ENCODE measurements at regions of chr17 and their contacts with region 1.

Region 1: GRCh38 chr17:32111141-32111771 is 31.0 kb upstream of the RHOT1 start:
- DNase-seq: peak; percentile 36
- H3K4me3 Mint-ChIP-seq: no peak overlapping the region
- H3K27ac Mint-ChIP-seq: no peak overlapping the region
- H3K4me1 Mint-ChIP-seq: peaks cover 27% of the 10 kb centered on the region
- H3K27me3 Mint-ChIP-seq: no peaks in the 10 kb centered on the region

Region 2: GRCh38 chr17:32033223-32033622 is 78.0 kb before region 1 on chr17:
- CTCF ChIA-PET with region 1: no interaction called
- POLR2A ChIA-PET with region 1: no interaction called
- DNase-seq: no peak
- H3K4me3 Mint-ChIP-seq: no peak overlapping the region
- H3K27ac Mint-ChIP-seq: no peak overlapping the region
- H3K4me1 Mint-ChIP-seq: peaks cover 4% of the 10 kb centered on the region
- H3K27me3 Mint-ChIP-seq: no peaks in the 10 kb centered on the region

Region 3: DNA sequence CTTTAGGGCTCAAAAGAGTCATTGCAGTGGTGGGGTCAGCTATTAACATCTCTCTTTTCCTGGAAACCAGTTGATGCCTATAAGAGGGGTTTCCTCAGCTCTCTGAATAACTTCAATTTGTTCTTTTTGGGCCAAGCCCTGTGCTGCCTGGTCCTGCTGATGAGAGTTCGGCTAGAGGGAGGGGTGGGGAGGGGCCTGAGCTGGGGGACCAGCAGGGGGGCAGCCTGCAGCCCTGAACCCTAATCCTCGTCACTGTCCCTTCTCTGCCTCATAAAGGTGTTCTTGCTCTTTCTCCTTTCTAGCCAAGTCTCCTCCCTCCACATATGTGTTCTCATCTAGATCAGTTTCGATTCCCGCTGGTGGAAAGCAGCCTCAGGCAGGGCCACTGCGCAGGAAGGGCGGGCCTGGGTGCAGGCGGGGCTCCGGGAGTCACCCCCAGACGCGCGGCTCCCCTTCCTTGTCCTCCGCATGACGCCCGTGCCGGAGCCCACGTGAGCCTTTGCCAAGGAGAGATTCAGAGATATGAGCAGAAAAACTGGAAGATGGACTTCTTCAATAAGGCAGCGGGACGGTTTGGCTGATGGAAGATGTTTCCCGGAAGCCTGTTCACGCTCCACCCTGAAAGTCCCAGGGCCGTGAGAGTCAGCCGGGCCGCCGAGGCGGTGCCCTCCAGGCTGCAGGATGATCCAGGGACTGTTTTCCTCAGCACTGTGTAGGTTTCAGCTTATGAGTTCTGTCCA is 16.1 kb after region 1 on chr17:
- CTCF ChIA-PET with region 1: interaction called, 11 read pairs
- POLR2A ChIA-PET with region 1: no interaction called
- DNase-seq: peak; percentile 94
- H3K4me3 Mint-ChIP-seq: peak overlapping the region; percentile 86
- H3K27ac Mint-ChIP-seq: peak overlapping the region; percentile 96
- H3K4me1 Mint-ChIP-seq: peaks cover 39% of the 10 kb centered on the region
- H3K27me3 Mint-ChIP-seq: peaks cover 2% of the 10 kb centered on the region

Region 4: DNA sequence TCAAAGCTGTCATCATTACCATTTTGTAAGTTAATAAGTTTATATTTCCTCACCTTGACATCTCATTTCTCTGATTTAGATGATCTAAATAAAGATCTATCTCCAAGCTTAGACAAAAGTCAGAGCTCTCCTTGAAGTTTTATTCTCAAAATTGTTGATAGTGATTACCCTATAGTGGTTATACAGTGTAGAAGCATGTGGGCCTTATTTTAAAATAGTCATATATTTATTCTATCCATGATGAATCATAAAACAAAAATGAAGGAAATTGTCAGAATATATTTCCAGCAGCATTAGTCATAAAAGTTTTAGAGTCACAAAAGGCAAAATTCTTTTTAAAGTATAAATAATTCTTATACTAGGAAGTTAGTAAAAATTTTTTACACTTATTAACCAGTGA is 80.0 kb after region 1 on chr17:
- CTCF ChIA-PET with region 1: no interaction called
- POLR2A ChIA-PET with region 1: no interaction called
- DNase-seq: no peak
- H3K4me3 Mint-ChIP-seq: no peak overlapping the region
- H3K27ac Mint-ChIP-seq: no peak overlapping the region
- H3K4me1 Mint-ChIP-seq: no peaks in the 10 kb centered on the region
- H3K27me3 Mint-ChIP-seq: no peaks in the 10 kb centered on the region

Measured in activated CD4-positive, alpha-beta T cell treated with anti-CD3 and anti-CD28 coated beads, Interleukin-2, amount 10 ng/mL, durations not matched to agents 7 days and 5 days (primary cell).